Esophagus muscularis mucosa (tissue), 4 donors: ENCODE measurements at regions of chr2 and their contacts with region 1.

Region 1: GRCh38 chr2:189579592-189580186 is 897 bp downstream of the SLC40A1 start:
- DNase-seq: no peak
- H3K4me3 ChIP-seq: peak overlapping the region; percentile 70 to 83 (median 79)
- H3K27ac ChIP-seq: peak overlapping the region; percentile 87 to 95 (median 92)
- H3K4me1 ChIP-seq: peaks cover 46 to 66% (median 63%) of the 10 kb centered on the region in 4 donors
- H3K27me3 ChIP-seq: no peaks in the 10 kb centered on the region
- CTCF ChIP-seq: no peak
- EP300 ChIP-seq: no peak
- POLR2A ChIP-seq: no peak

Region 2: GRCh38 chr2:189037518-189037917 is 542.2 kb before region 1 on chr2:
- intact Hi-C with region 1: no loop called
- DNase-seq: no peak
- H3K4me3 ChIP-seq: no peak overlapping the region
- H3K27ac ChIP-seq: no peak overlapping the region
- H3K4me1 ChIP-seq: peaks cover 0 to 9% (median 0%) of the 10 kb centered on the region in 4 donors
- H3K27me3 ChIP-seq: no peaks in the 10 kb centered on the region
- CTCF ChIP-seq: no peak
- EP300 ChIP-seq: no peak
- POLR2A ChIP-seq: no peak

Region 3: GRCh38 chr2:189440947-189441708 is 138.6 kb before region 1 on chr2 and contains the start of gene WDR75:
- intact Hi-C with region 1: loop called (anchors 5 kb)
- DNase-seq: peak; percentile 97
- H3K4me3 ChIP-seq: peak within 1 kb of the TSS; percentile 71 to 87 (median 78)
- H3K27ac ChIP-seq: peak within 1 kb of the TSS; percentile 89 to 93 (median 92)
- H3K4me1 ChIP-seq: peaks cover 17 to 38% (median 35%) of the 10 kb centered on the region in 4 donors
- H3K27me3 ChIP-seq: no peaks in the 10 kb centered on the region
- CTCF ChIP-seq: peak in 1 of 3 experiments; percentile 22
- EP300 ChIP-seq: no peak
- POLR2A ChIP-seq: peak; percentile 39
- total RNA-seq, gene WDR75: 18.7 to 35.3 (median 24.7) TPM

Region 4: GRCh38 chr2:189466660-189467059 is 113.0 kb before region 1 on chr2:
- intact Hi-C with region 1: loop called (anchors 5 kb)
- DNase-seq: no peak
- H3K4me3 ChIP-seq: no peak overlapping the region
- H3K27ac ChIP-seq: no peak overlapping the region
- H3K4me1 ChIP-seq: no peaks in the 10 kb centered on the region
- H3K27me3 ChIP-seq: no peaks in the 10 kb centered on the region
- CTCF ChIP-seq: peak; percentile 52 to 70 (median 57)
- EP300 ChIP-seq: no peak
- POLR2A ChIP-seq: no peak

Region 5: DNA sequence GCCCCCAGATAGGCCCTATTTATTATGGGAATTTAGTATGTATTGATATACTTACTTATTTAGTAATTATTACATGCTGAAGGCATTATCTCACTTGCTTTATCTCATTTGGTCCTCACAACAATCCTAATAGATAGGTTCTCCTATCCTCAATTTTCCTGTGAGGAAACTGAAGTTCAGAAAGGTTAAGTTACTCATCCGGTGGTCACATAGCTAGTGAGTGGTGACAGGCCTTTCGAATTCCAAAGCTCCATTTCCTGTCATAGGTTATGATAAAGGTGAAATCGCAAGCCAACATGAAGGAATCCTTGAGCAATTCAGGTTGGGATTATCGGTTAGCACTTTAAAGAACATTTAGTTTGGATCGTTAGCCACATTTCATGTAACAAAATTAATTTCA is 1102.5 kb after region 1 on chr2:
- intact Hi-C with region 1: no loop called
- DNase-seq: no peak
- H3K4me3 ChIP-seq: no peak overlapping the region
- H3K27ac ChIP-seq: no peak overlapping the region
- H3K4me1 ChIP-seq: peaks cover 4 to 37% (median 26%) of the 10 kb centered on the region in 4 donors
- H3K27me3 ChIP-seq: no peaks in the 10 kb centered on the region
- CTCF ChIP-seq: no peak
- EP300 ChIP-seq: no peak
- POLR2A ChIP-seq: no peak